Activated T-helper 1 cell treated with anti-CD3 and anti-CD28 coated beads, Interleukin-12 subunit alpha, Interleukin-12 subunit beta, Interleukin-2, Interleukin-4 antibody, amounts not matched to agents 30 ng/mL and 10 ng/mL and 1 ng/mL, durations not matched to agents 14 hours and 24 hours and 36 hours (primary cell): ENCODE measurements at regions of chrX and their contacts with region 1.

Region 1: GRCh38 chrX:49269010-49269767 is 404 bp upstream of the PPP1R3F start:
- DNase-seq: peak; percentile 90
- H3K4me3 Mint-ChIP-seq: peak overlapping the region; percentile 91
- H3K27ac Mint-ChIP-seq: peak overlapping the region; percentile 99
- H3K4me1 Mint-ChIP-seq: peaks cover 60% of the 10 kb centered on the region
- H3K27me3 Mint-ChIP-seq: no peaks in the 10 kb centered on the region

Region 2: DNA sequence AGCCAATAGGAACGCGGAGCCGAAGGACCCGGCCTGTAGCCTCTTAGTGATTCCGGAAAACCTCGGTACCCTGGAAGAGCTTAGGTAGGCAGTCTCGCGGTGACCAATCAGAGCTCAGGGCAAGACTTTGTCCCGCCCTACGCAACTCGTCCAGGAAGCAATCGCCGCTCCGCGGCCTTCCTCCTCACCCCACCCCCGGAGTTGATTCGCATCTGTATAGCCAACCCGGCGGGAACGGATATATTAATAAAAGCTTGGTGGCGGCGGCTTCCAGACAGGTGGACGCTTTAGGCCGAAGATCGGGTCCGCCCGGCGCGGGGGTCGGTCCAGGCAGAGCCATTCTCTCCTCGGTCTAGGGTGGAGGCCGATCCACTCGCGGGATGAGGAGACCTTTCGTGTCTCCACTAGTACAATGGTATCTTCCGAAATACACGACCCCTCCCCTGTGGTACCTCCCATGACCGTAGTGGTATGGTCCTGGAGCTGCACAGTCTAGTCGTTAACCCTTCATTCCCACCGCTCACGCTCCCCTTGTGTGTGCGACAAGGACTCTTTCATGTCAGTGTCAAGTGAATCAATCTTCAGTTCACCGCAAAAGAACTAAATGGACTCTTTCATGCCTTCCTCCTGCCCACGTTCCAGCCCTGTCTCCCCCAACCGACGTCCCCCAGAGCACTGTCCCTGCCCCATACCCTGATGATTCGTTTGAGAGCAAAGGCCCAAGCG is 531.8 kb before region 1 on chrX:
- intact Hi-C with region 1: loop called (anchors 1 kb)
- DNase-seq: peak; percentile 85
- H3K4me3 Mint-ChIP-seq: peak overlapping the region; percentile 98
- H3K27ac Mint-ChIP-seq: peak overlapping the region; percentile 98
- H3K4me1 Mint-ChIP-seq: peaks cover 23% of the 10 kb centered on the region
- H3K27me3 Mint-ChIP-seq: no peaks in the 10 kb centered on the region

Region 3: GRCh38 chrX:48917139-48918001 is 351.8 kb before region 1 on chrX:
- intact Hi-C with region 1: loop called (anchors 1 kb)
- DNase-seq: peak; percentile 87
- H3K4me3 Mint-ChIP-seq: peak overlapping the region; percentile 98
- H3K27ac Mint-ChIP-seq: peak overlapping the region; percentile 97
- H3K4me1 Mint-ChIP-seq: peaks cover 35% of the 10 kb centered on the region
- H3K27me3 Mint-ChIP-seq: no peaks in the 10 kb centered on the region

Region 4: GRCh38 chrX:49002091-49002935 is 266.9 kb before region 1 on chrX and contains the start of gene GRIPAP1:
- intact Hi-C with region 1: loop called (anchors 1 kb)
- DNase-seq: peak; percentile 68
- H3K4me3 Mint-ChIP-seq: peak within 1 kb of the TSS; percentile 99
- H3K27ac Mint-ChIP-seq: peak within 1 kb of the TSS; percentile 96
- H3K4me1 Mint-ChIP-seq: peaks cover 35% of the 10 kb centered on the region
- H3K27me3 Mint-ChIP-seq: no peaks in the 10 kb centered on the region
- total RNA-seq, gene GRIPAP1: 85.8 and 89.2 TPM in 2 replicates

Region 5: GRCh38 chrX:49120099-49120498 is 149.1 kb before region 1 on chrX:
- intact Hi-C with region 1: loop called (anchors 1 kb)
- DNase-seq: no peak
- H3K4me3 Mint-ChIP-seq: peak overlapping the region; percentile 69
- H3K27ac Mint-ChIP-seq: peak overlapping the region; percentile 71
- H3K4me1 Mint-ChIP-seq: peaks cover 40% of the 10 kb centered on the region
- H3K27me3 Mint-ChIP-seq: no peaks in the 10 kb centered on the region

Region 6: DNA sequence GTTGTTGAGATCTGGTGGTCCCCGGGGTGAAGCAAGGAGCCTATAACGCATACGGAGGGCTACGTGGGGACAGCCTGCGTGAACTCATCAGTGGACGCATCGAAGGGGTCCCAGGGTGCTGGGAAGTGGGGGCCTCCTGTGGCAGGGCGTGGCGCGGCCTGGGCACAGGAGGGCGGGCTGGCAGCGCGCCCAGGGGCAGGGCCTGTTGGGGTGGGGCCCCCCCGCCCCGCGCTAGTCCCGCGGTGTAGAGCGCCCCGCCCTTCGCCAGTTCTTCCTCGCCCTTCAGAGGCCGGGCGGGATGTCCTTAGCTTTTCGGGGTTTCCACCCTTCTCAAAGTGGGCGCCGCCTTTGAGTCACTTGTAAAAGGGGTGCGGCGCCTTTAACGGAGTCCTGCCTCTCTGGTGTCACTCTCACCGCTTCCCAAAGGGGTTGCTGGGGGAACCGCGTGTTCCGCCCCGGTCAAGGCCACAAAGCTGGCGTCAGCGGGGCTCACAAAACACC is 96.9 kb before region 1 on chrX:
- intact Hi-C with region 1: loop called (anchors 1 kb)
- DNase-seq: peak; percentile 55
- H3K4me3 Mint-ChIP-seq: peak overlapping the region; percentile 88
- H3K27ac Mint-ChIP-seq: peak overlapping the region; percentile 84
- H3K4me1 Mint-ChIP-seq: peaks cover 15% of the 10 kb centered on the region
- H3K27me3 Mint-ChIP-seq: peaks cover under 1% of the 10 kb centered on the region

Region 7: DNA sequence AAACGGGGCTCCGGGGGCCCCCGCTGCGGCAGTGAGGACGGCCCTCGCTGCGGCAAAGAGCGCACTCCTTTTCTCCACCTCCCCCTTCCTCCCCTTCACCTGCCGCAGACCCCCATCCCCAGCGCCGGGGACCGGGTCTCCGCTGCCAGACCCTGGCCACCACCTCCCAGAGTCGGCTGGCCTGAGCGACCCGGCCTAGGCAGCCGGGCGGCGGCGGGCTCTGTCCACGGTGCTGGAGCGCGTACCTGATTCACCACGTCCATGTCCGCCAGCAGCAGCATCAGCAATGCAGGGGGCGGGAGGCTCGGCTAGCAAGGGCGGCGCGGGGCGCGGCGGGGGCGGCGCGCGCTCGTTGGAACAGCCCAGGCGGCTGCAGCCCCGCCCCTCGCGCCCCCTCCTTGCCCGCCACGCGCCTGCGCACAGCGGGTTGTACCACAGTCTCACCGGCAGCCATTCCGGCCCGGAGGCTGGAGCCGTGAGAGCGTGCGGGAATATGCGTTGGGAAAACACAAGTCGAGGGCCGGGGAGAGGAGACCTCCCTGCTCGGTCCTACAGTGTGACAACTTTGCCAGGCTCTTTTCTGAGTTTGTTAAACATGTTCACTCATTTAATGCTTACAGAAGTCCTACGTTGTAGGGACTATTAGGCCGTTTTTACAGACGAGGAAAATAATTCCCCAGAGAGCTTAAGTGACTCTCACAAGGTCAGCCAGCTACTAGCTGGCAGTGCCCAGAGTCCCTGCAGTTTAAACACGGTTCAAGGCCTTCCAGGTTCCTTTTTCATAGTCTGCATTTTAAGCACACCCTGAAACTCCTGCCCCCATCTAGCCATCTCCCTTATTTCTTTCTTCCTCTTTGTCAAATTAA is 69.0 kb before region 1 on chrX and contains the start of gene SYP:
- intact Hi-C with region 1: loop called (anchors 1 kb)
- DNase-seq: peak; percentile 83
- H3K4me3 Mint-ChIP-seq: peak within 1 kb of the TSS; percentile 53
- H3K27ac Mint-ChIP-seq: peak within 1 kb of the TSS; percentile 58
- H3K4me1 Mint-ChIP-seq: peaks cover 19% of the 10 kb centered on the region
- H3K27me3 Mint-ChIP-seq: peaks cover 7% of the 10 kb centered on the region
- total RNA-seq, gene SYP: 2.9 and 3.3 TPM in 2 replicates

Region 8: DNA sequence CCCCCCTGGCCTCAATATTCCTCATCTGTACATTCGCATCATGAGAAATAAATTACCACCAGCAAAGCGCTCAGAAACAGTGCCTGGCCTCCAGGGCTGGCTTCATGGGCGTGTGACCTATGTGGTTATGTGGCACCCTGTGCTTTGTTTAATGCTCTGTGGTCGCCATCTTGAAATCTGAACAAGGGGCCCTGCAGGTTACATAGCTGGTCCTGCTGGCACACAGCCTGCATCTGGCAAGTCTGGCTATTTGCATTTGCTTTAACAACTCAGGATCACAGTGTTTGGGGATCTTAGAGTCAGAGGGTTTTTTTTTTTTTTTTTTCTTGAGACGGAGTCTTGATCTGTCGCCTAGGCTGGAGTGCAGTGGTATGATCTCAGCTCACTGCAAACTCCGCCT is 14.6 kb before region 1 on chrX:
- intact Hi-C with region 1: no loop called
- DNase-seq: no peak
- H3K4me3 Mint-ChIP-seq: no peak overlapping the region
- H3K27ac Mint-ChIP-seq: no peak overlapping the region
- H3K4me1 Mint-ChIP-seq: peaks cover 5% of the 10 kb centered on the region
- H3K27me3 Mint-ChIP-seq: no peaks in the 10 kb centered on the region

Region 9: DNA sequence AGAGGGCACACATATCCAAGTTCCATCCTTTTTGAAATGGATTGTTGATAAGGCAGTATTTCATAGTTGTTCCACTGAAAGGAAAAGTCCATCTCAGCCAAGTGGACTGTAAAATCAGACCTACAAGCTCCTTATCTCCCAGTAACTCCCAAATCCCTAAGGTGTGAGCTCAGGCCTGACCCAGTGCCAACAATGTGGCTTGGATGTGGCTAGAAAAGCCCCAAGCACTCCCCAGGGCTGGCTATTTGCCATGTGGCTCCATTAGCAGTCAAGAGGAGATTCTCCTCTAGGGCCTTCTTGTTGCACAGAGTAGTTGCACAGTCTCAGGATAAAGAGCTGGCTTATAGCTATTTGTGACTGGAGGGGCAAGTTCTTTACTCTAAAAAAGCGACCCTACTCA is 1226.4 kb after region 1 on chrX:
- intact Hi-C with region 1: no loop called
- DNase-seq: no peak
- H3K4me3 Mint-ChIP-seq: no peak overlapping the region
- H3K27ac Mint-ChIP-seq: no peak overlapping the region
- H3K4me1 Mint-ChIP-seq: no peaks in the 10 kb centered on the region
- H3K27me3 Mint-ChIP-seq: peaks cover 3% of the 10 kb centered on the region